Activated CD4-positive, alpha-beta T cell treated with anti-CD3 and anti-CD28 coated beads for 36 hours (primary cell): ENCODE measurements at regions of chr21 and their contacts with region 1.

Region 1: DNA sequence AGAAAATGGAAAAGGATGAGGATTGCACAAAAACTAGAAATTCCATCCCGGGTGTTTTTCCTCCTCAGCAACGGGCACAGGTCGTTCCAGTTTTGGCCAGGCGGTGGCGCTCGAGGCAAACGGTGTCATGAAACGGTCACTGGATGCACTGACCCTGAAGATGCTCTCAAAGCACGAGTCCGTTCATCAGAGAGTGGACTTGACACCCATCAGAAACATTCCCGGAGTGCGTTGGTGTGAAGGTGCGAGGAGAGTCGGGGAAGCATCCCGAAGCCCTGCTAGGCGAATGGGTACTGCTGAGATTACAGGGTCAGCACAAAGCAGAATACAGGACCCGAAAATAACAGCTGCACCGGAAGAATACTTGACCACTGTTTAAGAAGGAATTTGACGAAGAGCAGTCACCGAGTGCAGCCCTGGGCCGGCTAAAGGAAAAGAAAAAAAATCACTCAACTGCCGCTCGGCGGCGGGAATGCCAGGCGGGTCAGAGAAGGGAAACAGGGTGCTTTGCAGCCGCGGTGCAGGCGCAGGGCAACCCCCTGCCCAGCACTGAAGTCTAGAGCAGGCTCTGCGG is 71.7 kb upstream of the ETS2 start:
- DNase-seq: peak; percentile 84
- ATAC-seq: peak; percentile 60
- H3K4me3 Mint-ChIP-seq: peak overlapping the region; percentile 74
- H3K27ac Mint-ChIP-seq: peak overlapping the region; percentile 67
- H3K4me1 Mint-ChIP-seq: peaks cover 11% of the 10 kb centered on the region
- H3K27me3 Mint-ChIP-seq: peaks cover 17% of the 10 kb centered on the region

Region 2: DNA sequence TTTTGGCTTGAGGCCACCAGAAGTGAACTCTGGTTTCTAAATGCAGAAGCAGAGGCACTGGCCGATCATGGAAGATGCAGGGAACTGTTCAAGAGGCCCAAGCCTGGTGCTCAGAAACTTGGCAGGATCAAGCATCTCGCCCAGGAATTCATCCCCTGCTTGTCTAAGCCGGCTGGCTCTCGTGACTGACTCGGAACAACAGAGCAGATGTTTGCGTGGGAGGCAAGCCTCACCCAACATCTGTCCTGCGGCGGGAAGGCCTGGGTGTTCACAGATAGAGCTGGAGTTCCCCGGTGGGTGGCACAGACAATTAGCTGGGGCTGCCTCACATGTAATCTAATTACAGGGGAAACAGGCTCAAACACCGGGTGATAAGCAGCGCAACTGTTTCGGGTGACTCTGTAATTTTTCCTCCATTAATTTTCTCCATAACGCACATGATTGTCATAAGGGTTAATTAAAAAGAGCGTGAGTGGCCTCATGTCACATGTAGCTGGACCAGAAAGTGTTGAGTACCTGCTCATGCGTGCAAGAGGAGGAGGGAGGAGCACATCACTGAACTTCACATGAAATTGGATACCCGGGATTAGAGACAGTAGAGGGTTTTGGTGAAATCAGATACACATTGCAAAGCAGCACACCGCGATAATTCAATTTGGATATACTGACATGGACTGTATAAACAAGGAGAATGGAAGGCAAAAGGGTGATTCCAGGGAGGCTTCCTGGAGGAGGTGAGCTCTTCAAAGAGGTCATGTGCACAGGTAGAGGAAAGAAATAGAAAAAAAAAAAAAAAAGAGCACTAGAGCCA is 251.7 kb after region 1 on chr21:
- CTCF ChIA-PET with region 1: no interaction called
- POLR2A ChIA-PET with region 1: no interaction called
- intact Hi-C with region 1: loop called in 1 of 2 experiments (anchors 10 kb)
- DNase-seq: peak; percentile 85
- ATAC-seq: peak; percentile 84
- H3K4me3 Mint-ChIP-seq: peak overlapping the region; percentile 51
- H3K27ac Mint-ChIP-seq: peak overlapping the region; percentile 85
- H3K4me1 Mint-ChIP-seq: peaks cover 21% of the 10 kb centered on the region
- H3K27me3 Mint-ChIP-seq: peaks cover 60% of the 10 kb centered on the region

Region 3: GRCh38 chr21:39125752-39126485 is 391.9 kb after region 1 on chr21:
- CTCF ChIA-PET with region 1: interaction called, 3 read pairs
- POLR2A ChIA-PET with region 1: no interaction called
- intact Hi-C with region 1: loop called (anchors 1 to 2 kb)
- DNase-seq: peak; percentile 31
- ATAC-seq: peak; percentile 70
- H3K4me3 Mint-ChIP-seq: no peak overlapping the region
- H3K27ac Mint-ChIP-seq: no peak overlapping the region
- H3K4me1 Mint-ChIP-seq: no peaks in the 10 kb centered on the region
- H3K27me3 Mint-ChIP-seq: no peaks in the 10 kb centered on the region

Region 4: GRCh38 chr21:39137248-39138178 is 403.5 kb after region 1 on chr21:
- CTCF ChIA-PET with region 1: interaction called, 8 read pairs
- POLR2A ChIA-PET with region 1: no interaction called
- intact Hi-C with region 1: loop called (anchors 1 kb)
- DNase-seq: peak; percentile 26
- ATAC-seq: peak; percentile 42
- H3K4me3 Mint-ChIP-seq: no peak overlapping the region
- H3K27ac Mint-ChIP-seq: no peak overlapping the region
- H3K4me1 Mint-ChIP-seq: no peaks in the 10 kb centered on the region
- H3K27me3 Mint-ChIP-seq: no peaks in the 10 kb centered on the region

Region 5: DNA sequence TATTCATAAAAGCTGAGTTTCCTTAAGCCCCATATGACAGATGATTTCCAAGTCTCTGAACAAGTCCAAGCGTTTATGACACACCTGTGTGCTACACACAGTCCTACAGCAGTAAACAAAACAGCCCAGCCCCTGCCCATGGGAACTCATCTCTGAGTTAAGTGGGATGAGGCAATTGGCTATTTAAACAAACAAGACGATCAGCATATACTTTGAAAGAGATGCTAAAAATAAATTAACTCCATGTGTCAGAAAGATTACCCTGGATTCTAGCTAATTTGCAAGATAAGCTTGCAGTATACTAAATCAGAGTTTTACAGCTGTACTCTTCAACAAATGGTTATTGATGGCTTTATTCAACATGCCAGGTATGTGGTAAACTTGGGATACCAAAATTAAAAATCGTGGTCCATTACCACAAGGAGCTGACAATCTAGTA is 442.2 kb after region 1 on chr21:
- CTCF ChIA-PET with region 1: interaction called, 3 read pairs
- POLR2A ChIA-PET with region 1: no interaction called
- intact Hi-C with region 1: loop called in 1 of 2 experiments (anchors 1 kb)
- DNase-seq: no peak
- ATAC-seq: no peak
- H3K4me3 Mint-ChIP-seq: no peak overlapping the region
- H3K27ac Mint-ChIP-seq: no peak overlapping the region
- H3K4me1 Mint-ChIP-seq: peaks cover 20% of the 10 kb centered on the region
- H3K27me3 Mint-ChIP-seq: no peaks in the 10 kb centered on the region